ENCODE measurements at regions of chr1 and their contacts with region 1.

Region 1: DNA sequence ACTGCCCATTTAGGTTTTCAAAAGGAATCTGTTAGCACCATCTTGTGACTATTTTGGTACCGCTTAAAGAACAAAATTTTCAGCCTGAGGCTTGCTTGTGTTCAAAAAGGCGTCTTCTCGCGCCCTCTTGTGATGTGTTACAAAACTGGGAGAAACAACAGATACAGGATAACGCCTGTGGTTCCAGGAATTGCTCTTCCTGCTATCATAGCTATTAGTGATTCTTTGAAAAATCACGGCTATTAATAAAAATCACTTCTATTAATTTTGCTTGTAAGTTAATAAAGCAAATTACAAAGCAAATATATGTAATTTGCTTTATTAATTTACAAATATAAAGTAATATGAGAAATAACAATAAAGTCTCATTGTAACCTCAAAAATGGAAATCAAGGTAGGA is 82.2 kb upstream of the ABCD3 start:
- DNase-seq: no peak
- H3K4me3 ChIP-seq: no peak overlapping the region
- H3K27ac ChIP-seq: no peak overlapping the region
- H3K4me1 ChIP-seq: peaks cover 0 to 7% (median 0%) of the 10 kb centered on the region in 4 experiments; a peak in 1 of 7 replicates
- H3K27me3 ChIP-seq: no peaks in the 10 kb centered on the region
- CTCF ChIP-seq: peak in 2 of 3 experiments; percentile 87 to 98; a peak in 3 of 4 replicates
- EP300 ChIP-seq: no peak
- POLR2A ChIP-seq: no peak
- RAD21 ChIP-seq: peak; percentile 99 to 100

Region 2: GRCh38 chr1:94068999-94069918 is 266.7 kb before region 1 on chr1:
- CTCF ChIA-PET with region 1: interaction called, 410 read pairs
- POLR2A ChIA-PET with region 1: no interaction called
- DNase-seq: no peak
- H3K4me3 ChIP-seq: no peak overlapping the region
- H3K27ac ChIP-seq: no peak overlapping the region
- H3K4me1 ChIP-seq: 0 out of 7 replicates have a peak, but pooled peaks cover 0 to 4% (median 0%) of the 10 kb centered on the region in 4 experiments
- H3K27me3 ChIP-seq: peaks cover 38 to 63% (median 55%) of the 10 kb centered on the region in 4 experiments
- CTCF ChIP-seq: no peak
- EP300 ChIP-seq: no peak
- POLR2A ChIP-seq: no peak
- RAD21 ChIP-seq: no peak

Region 3: DNA sequence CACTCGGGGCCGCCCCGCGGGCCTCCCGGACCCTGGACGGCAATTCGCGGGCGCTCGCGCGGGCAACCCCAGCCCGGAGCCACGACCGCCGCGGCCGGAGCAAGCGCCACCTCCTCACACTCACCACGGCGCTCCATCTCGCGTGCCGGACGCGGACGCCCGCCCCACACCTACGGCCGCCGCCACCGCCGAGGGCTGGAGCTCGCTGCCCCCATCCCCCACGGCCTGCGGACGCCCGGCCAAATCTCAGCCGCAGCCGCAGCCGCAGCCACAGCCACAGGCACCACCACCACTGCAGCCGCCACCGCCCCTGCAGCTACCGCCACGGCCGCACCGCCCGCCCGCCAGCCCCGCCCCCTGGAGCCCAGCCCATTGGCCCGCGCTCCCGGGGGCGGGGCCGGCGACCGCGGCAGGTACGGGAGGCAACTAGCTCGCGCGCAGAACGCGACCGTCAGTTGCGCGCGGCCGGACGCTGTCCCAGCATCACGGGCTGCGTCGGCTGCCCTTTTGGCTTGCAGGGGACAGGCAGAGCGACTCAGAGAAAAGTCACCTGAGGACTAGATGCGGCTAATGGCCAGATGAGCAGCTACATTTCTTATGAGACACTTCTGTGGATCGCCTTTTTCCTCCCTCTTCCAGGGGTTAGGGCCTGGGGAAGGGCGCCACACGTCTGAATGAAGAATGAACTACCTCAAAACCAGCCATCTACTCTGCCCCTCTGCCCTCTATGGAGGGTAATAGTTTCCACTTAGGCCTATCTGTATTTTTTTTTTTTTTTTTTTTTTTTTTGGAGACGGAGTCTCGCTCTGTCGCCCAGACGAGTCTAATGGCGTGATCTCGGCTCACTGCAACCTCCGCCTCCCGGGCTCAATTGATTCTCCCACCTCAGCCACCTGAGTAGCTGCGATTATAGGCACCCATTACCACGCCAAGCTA is 98.4 kb before region 1 on chr1 and contains the start of gene ARHGAP29:
- CTCF ChIA-PET with region 1: interaction called, 82 read pairs
- POLR2A ChIA-PET with region 1: no interaction called
- DNase-seq: peak in 1 of 2 experiments; percentile 89
- H3K4me3 ChIP-seq: peak within 1 kb of the TSS; percentile 53 to 84 (median 70)
- H3K27ac ChIP-seq: no peak within 1 kb of the TSS
- H3K4me1 ChIP-seq: peaks cover 0 to 2% (median 0%) of the 10 kb centered on the region in 4 experiments; a peak in 1 of 7 replicates
- H3K27me3 ChIP-seq: peaks cover 17 to 40% (median 32%) of the 10 kb centered on the region in 4 experiments
- CTCF ChIP-seq: peak in 1 of 3 experiments; percentile 11; a peak in 2 of 4 replicates
- EP300 ChIP-seq: no peak
- POLR2A ChIP-seq: peak in 1 of 2 experiments; percentile 76; a peak in 2 of 3 replicates
- RAD21 ChIP-seq: peak; percentile 20 to 22; a peak in 2 of 4 replicates
- total RNA-seq, gene ARHGAP29: 2.9 and 3.2 TPM in 2 replicates

Region 4: GRCh38 chr1:94270801-94271203 is 65.1 kb before region 1 on chr1:
- CTCF ChIA-PET with region 1: interaction called, 10 read pairs
- POLR2A ChIA-PET with region 1: no interaction called
- DNase-seq: no peak
- H3K4me3 ChIP-seq: no peak overlapping the region
- H3K27ac ChIP-seq: no peak overlapping the region
- H3K4me1 ChIP-seq: no peaks in the 10 kb centered on the region
- H3K27me3 ChIP-seq: peaks cover 0 to 1% (median 0%) of the 10 kb centered on the region in 4 experiments; a peak in 3 of 7 replicates
- CTCF ChIP-seq: no peak
- EP300 ChIP-seq: no peak
- POLR2A ChIP-seq: no peak
- RAD21 ChIP-seq: no peak

Region 5: GRCh38 chr1:94310570-94311270 is 25.2 kb before region 1 on chr1:
- CTCF ChIA-PET with region 1: no interaction called
- POLR2A ChIA-PET with region 1: no interaction called
- DNase-seq: no peak
- H3K4me3 ChIP-seq: no peak overlapping the region
- H3K27ac ChIP-seq: no peak overlapping the region
- H3K4me1 ChIP-seq: no peaks in the 10 kb centered on the region
- H3K27me3 ChIP-seq: no peaks in the 10 kb centered on the region; a peak in 1 of 7 replicates
- CTCF ChIP-seq: no peak
- EP300 ChIP-seq: no peak
- POLR2A ChIP-seq: no peak
- RAD21 ChIP-seq: no peak

Region 6: GRCh38 chr1:94322696-94323095 is 13.3 kb before region 1 on chr1:
- CTCF ChIA-PET with region 1: interaction called, 26 read pairs
- POLR2A ChIA-PET with region 1: no interaction called
- DNase-seq: no peak
- H3K4me3 ChIP-seq: no peak overlapping the region
- H3K27ac ChIP-seq: no peak overlapping the region
- H3K4me1 ChIP-seq: peaks cover 6 to 11% (median 9%) of the 10 kb centered on the region in 4 experiments
- H3K27me3 ChIP-seq: no peaks in the 10 kb centered on the region; a peak in 1 of 7 replicates
- CTCF ChIP-seq: no peak
- EP300 ChIP-seq: no peak
- POLR2A ChIP-seq: no peak
- RAD21 ChIP-seq: no peak

Region 7: GRCh38 chr1:94411237-94411636 is 75.3 kb after region 1 on chr1:
- CTCF ChIA-PET with region 1: no interaction called
- POLR2A ChIA-PET with region 1: no interaction called
- DNase-seq: no peak
- H3K4me3 ChIP-seq: no peak overlapping the region
- H3K27ac ChIP-seq: no peak overlapping the region
- H3K4me1 ChIP-seq: peaks cover 0 to 4% (median 0%) of the 10 kb centered on the region in 4 experiments; a peak in 1 of 7 replicates
- H3K27me3 ChIP-seq: no peaks in the 10 kb centered on the region
- CTCF ChIP-seq: no peak
- EP300 ChIP-seq: no peak
- POLR2A ChIP-seq: no peak
- RAD21 ChIP-seq: no peak